MCF 10A (cell line): ENCODE measurements at regions of chr12 and their contacts with region 1.

Region 1: GRCh38 chr12:127293507-127294310 is 973.3 kb upstream of the TMEM132C start:
- DNase-seq: peak; percentile 83
- H3K4me3 Mint-ChIP-seq: no peak overlapping the region
- H3K27ac Mint-ChIP-seq: no peak overlapping the region
- H3K4me1 Mint-ChIP-seq: peaks cover 7% of the 10 kb centered on the region
- H3K27me3 Mint-ChIP-seq: no peaks in the 10 kb centered on the region
- CTCF ChIP-seq: peak; percentile 94

Region 2: DNA sequence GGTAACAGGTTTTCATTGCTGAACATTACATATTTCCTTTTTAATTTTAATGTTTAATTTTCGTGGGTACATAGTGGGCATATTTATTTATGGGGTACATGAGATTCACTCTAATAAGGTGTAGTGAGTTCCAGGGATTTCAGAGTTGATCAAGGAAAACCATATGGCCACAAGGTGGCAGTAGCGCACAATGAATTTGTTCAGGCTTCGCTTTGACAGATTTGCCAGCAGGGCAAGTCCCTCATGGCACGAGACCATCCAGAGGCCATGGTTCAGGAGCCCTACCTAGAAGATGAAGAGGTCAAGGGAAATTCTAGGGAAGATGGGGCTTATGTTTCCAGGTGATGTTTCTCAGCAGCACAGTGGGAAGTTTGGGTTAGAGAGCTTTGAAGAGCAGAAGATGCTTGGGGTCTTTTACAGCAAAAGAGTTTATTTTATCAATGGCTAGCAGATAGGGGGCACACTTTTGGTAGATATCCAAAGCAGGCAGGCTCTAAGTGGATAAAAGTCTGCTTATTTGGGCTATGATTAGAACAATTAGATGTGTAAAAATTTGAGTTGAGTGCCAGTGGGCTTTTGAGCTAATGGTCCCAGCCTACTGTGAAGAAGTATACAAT is 1224.1 kb before region 1 on chr12:
- CTCF ChIA-PET with region 1: no interaction called
- POLR2A ChIA-PET with region 1: no interaction called
- intact Hi-C with region 1: loop called (anchors 5 kb)
- DNase-seq: peak; percentile 82
- H3K4me3 Mint-ChIP-seq: no peak overlapping the region
- H3K27ac Mint-ChIP-seq: peak overlapping the region; percentile 8
- H3K4me1 Mint-ChIP-seq: no peaks in the 10 kb centered on the region
- H3K27me3 Mint-ChIP-seq: no peaks in the 10 kb centered on the region
- CTCF ChIP-seq: peak; percentile 74

Region 3: DNA sequence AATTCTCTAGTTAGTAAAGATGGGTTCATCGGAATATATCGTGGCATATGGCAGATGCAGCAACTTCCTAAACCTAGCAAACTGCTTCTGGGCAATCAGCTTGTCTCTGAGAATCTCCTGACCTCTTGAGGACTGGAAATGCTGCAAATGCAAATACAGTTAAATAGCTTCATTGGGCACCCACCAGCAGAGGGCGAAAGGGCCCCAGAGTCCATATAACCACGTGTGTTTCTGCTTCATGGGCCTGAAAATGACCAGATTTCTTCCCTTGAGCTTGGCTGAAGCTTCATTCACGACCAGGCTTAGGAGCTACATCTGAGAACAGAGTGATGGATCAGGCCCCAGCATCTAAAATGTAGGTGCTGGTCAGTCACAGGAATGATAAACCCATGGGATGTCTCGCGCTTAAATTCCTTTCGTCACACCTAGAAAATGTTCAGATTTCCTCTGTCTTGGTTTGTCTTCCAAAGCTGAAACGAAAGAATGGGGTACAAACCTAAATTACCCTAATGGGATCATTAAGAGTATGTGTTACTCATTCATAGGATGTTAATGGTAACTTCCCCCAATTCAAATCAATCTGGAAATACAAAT is 509.3 kb before region 1 on chr12:
- CTCF ChIA-PET with region 1: interaction called, 5 read pairs
- POLR2A ChIA-PET with region 1: no interaction called
- intact Hi-C with region 1: loop called (anchors 1 kb)
- DNase-seq: peak; percentile 64
- H3K4me3 Mint-ChIP-seq: no peak overlapping the region
- H3K27ac Mint-ChIP-seq: no peak overlapping the region
- H3K4me1 Mint-ChIP-seq: no peaks in the 10 kb centered on the region
- H3K27me3 Mint-ChIP-seq: peaks cover 28% of the 10 kb centered on the region
- CTCF ChIP-seq: peak; percentile 70

Region 4: GRCh38 chr12:126914170-126914793 is 379.4 kb before region 1 on chr12:
- CTCF ChIA-PET with region 1: no interaction called
- POLR2A ChIA-PET with region 1: no interaction called
- intact Hi-C with region 1: no loop called
- DNase-seq: no peak
- H3K4me3 Mint-ChIP-seq: no peak overlapping the region
- H3K27ac Mint-ChIP-seq: no peak overlapping the region
- H3K4me1 Mint-ChIP-seq: no peaks in the 10 kb centered on the region
- H3K27me3 Mint-ChIP-seq: no peaks in the 10 kb centered on the region
- CTCF ChIP-seq: no peak

Region 5: DNA sequence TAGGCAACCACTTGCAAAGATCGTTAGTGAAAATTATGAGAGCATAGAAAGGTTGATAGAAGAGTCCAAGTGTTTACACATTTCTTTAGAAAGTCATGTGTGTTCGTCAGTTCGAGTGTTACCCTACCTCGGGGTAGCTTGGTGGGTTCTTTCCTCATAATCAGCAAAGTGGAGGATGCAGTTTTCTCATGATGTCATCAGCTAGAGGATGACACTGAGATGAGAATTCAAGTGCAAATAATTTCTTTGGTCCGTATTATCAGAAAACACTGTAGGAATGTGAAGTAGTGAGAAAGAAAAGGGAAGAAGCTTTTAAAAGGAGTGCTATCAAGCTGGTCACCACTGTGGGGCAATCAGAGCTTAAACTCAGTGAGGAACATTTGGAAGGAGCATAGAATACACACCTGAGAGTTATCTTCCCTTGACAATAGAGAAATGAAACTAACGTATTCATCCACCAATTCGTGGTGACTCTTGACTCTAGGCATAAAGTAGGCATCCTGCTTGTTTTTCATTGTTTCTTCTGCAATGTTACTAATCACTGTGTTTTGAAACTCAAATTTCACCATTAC is 367.6 kb before region 1 on chr12:
- CTCF ChIA-PET with region 1: interaction called, 3 read pairs
- POLR2A ChIA-PET with region 1: no interaction called
- intact Hi-C with region 1: loop called (anchors 1 kb)
- DNase-seq: peak; percentile 17
- H3K4me3 Mint-ChIP-seq: no peak overlapping the region
- H3K27ac Mint-ChIP-seq: no peak overlapping the region
- H3K4me1 Mint-ChIP-seq: peaks cover 6% of the 10 kb centered on the region
- H3K27me3 Mint-ChIP-seq: no peaks in the 10 kb centered on the region
- CTCF ChIP-seq: no peak

Region 6: GRCh38 chr12:126998031-126998430 is 295.7 kb before region 1 on chr12:
- CTCF ChIA-PET with region 1: no interaction called
- POLR2A ChIA-PET with region 1: no interaction called
- intact Hi-C with region 1: no loop called
- DNase-seq: no peak
- H3K4me3 Mint-ChIP-seq: no peak overlapping the region
- H3K27ac Mint-ChIP-seq: no peak overlapping the region
- H3K4me1 Mint-ChIP-seq: no peaks in the 10 kb centered on the region
- H3K27me3 Mint-ChIP-seq: no peaks in the 10 kb centered on the region
- CTCF ChIP-seq: no peak

Region 7: DNA sequence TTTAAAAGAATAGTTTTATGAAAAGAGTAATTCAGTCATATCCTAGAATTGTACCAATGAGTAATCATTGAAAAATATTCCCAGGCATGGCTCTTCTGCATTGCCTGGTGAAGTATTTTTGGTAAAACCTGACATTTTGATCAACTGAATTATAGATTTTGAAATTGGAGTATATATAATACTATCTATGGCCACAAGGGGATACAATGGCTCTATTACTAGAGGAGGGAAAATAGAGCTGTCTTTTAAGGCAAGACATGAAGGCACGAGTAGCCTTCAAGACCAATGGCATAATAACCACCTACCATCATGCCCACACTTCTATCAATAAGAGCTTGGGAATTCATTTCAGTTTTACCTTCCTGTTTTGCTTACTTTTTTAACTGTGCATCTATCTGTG is 268.2 kb before region 1 on chr12:
- CTCF ChIA-PET with region 1: interaction called, 5 read pairs
- POLR2A ChIA-PET with region 1: no interaction called
- intact Hi-C with region 1: loop called (anchors 1 kb)
- DNase-seq: peak; percentile 14
- H3K4me3 Mint-ChIP-seq: no peak overlapping the region
- H3K27ac Mint-ChIP-seq: no peak overlapping the region
- H3K4me1 Mint-ChIP-seq: no peaks in the 10 kb centered on the region
- H3K27me3 Mint-ChIP-seq: no peaks in the 10 kb centered on the region
- CTCF ChIP-seq: peak; percentile 18

Region 8: GRCh38 chr12:127150028-127150427 is 143.7 kb before region 1 on chr12:
- CTCF ChIA-PET with region 1: interaction called, 8 read pairs
- POLR2A ChIA-PET with region 1: no interaction called
- intact Hi-C with region 1: loop called (anchors 1 kb)
- DNase-seq: no peak
- H3K4me3 Mint-ChIP-seq: no peak overlapping the region
- H3K27ac Mint-ChIP-seq: no peak overlapping the region
- H3K4me1 Mint-ChIP-seq: no peaks in the 10 kb centered on the region
- H3K27me3 Mint-ChIP-seq: no peaks in the 10 kb centered on the region
- CTCF ChIP-seq: no peak

Region 9: DNA sequence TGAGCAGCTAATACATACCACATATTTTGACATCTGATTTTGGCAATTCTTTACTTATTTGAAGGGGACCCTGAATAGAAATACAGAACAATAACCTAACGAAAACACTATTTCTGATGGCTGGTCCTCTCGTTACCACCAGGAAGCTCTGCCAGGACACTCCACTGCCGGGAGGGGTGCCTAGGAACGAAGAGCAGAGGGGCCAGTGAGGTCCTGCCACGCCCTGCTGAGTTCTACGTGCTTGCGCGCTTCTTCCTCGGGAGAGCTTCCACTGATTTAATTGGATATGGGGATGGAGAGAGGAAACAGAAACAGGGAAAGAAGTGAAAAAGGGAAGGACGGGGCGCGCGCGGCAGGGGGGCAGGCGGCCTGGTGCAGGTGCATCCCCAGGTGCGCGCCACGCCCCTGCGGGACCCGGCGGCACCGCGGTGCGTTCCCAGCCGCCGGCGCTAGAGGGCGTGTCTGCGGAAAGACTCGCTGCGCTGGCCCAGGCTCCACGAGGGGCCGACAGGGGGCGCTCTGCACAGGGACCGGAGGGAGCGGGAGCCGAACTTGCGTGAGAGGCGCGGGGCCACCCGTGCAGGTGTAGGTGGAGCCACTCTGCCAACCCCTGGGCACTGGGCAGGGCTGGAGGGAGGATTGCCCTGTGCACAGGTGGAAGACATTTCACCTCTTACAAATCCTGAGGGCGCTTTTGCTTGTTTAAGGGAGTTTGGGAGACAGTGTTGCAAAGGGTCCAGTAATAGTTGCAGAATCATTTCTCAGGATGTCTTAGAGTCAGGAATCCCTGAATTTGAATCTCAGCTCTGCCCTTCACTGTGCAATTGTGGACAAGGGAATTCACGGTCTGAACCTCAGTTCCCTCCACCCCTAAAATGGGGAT is 13.1 kb before region 1 on chr12:
- CTCF ChIA-PET with region 1: interaction called, 23 read pairs
- POLR2A ChIA-PET with region 1: no interaction called
- intact Hi-C with region 1: no loop called
- DNase-seq: no peak
- H3K4me3 Mint-ChIP-seq: no peak overlapping the region
- H3K27ac Mint-ChIP-seq: no peak overlapping the region
- H3K4me1 Mint-ChIP-seq: peaks cover 11% of the 10 kb centered on the region
- H3K27me3 Mint-ChIP-seq: no peaks in the 10 kb centered on the region
- CTCF ChIP-seq: peak; percentile 48

Region 10: GRCh38 chr12:127539226-127539858 is 245.6 kb after region 1 on chr12:
- CTCF ChIA-PET with region 1: no interaction called
- POLR2A ChIA-PET with region 1: no interaction called
- intact Hi-C with region 1: no loop called
- DNase-seq: no peak
- H3K4me3 Mint-ChIP-seq: no peak overlapping the region
- H3K27ac Mint-ChIP-seq: no peak overlapping the region
- H3K4me1 Mint-ChIP-seq: no peaks in the 10 kb centered on the region
- H3K27me3 Mint-ChIP-seq: no peaks in the 10 kb centered on the region
- CTCF ChIP-seq: no peak